Sigmoid colon (tissue), 7 donors: ENCODE measurements at regions of chr4 and their contacts with region 1.

Region 1: DNA sequence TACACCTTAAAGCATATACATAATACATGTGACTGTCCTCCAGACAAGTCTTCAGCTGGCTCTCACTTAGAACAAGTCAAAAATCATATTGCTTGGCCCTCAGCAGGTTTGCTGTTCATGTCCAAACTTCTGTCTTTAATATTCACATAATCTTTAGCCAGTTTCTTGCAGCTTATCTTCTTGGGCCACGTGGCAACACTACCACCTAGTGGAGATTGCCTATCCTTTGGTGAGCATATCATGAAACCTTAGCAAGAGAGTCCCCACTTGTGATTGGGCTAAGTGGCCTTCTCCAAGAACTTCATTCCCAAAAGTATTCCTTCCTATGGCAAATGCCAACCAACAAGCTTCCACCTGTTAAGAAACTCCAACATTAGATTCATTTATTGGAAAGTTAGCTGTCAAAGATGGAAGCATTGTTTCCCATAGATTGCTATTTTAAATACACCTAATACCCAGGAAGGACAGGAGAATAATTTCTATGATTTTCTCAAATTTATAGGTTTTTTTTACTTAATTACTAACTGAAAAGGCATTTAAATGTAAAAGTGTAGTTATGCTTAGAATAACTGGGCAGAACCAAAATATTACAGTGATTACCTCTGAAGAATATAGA is 231.9 kb upstream of the INTU start:
- DNase-seq: peak; percentile 70
- H3K4me3 ChIP-seq: no peak overlapping the region
- H3K27ac ChIP-seq: no peak overlapping the region
- H3K4me1 ChIP-seq: peaks cover 0 to 21% (median 15%) of the 10 kb centered on the region in 4 donors
- H3K27me3 ChIP-seq: no peaks in the 10 kb centered on the region
- CTCF ChIP-seq: peak; percentile 13 to 67 (median 58)
- EP300 ChIP-seq: no peak
- POLR2A ChIP-seq: no peak

Region 2: GRCh38 chr4:127141856-127142255 is 259.0 kb before region 1 on chr4:
- intact Hi-C with region 1: loop called (anchors 10 kb)
- DNase-seq: no peak
- H3K4me3 ChIP-seq: no peak overlapping the region
- H3K27ac ChIP-seq: no peak overlapping the region
- H3K4me1 ChIP-seq: peaks cover 0 to 34% (median 13%) of the 10 kb centered on the region in 4 donors
- H3K27me3 ChIP-seq: no peaks in the 10 kb centered on the region
- CTCF ChIP-seq: no peak
- EP300 ChIP-seq: no peak
- POLR2A ChIP-seq: no peak